Dendritic cell treated with granulocyte-macrophage colony-stimulating factor and Interleukin-4, amounts not matched to agents 40 ng/mL and 50 ng/mL, for 4 days (primary cell): ENCODE measurements at regions of chr5 and their contacts with region 1.

Region 1: GRCh38 chr5:42767491-42768105 is 11.0 kb downstream of the CCDC152 start:
- H3K4me3 Mint-ChIP-seq: no peak overlapping the region
- H3K27ac Mint-ChIP-seq: no peak overlapping the region
- H3K4me1 Mint-ChIP-seq: no peaks in the 10 kb centered on the region
- H3K27me3 Mint-ChIP-seq: peaks cover 1% of the 10 kb centered on the region

Region 2: GRCh38 chr5:41924872-41925554 is 842.6 kb before region 1 on chr5 and contains the start of gene FBXO4:
- intact Hi-C with region 1: loop called (anchors 10 kb)
- H3K4me3 Mint-ChIP-seq: peak within 1 kb of the TSS; percentile 93
- H3K27ac Mint-ChIP-seq: peak within 1 kb of the TSS; percentile 99
- H3K4me1 Mint-ChIP-seq: peaks cover 28% of the 10 kb centered on the region
- H3K27me3 Mint-ChIP-seq: no peaks in the 10 kb centered on the region

Region 3: DNA sequence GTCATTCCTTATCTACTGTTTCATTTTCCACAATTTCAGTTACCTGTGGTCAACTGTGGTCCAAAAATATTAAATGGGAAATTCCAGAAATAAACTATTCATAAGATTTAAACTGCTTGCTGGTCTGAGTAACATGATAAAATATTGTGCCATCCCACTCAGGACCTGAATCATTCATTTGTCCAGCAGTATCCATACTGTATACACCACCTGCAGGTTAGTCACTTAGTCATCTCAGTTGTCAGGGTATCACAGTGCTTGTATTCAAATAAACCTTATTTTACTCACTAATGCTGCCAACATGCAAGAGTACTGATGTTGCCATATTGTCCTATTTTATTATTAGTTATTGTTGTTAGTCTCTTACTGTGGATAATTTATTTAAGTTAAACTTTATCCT is 702.8 kb before region 1 on chr5:
- intact Hi-C with region 1: loop called (anchors 10 kb)
- H3K4me3 Mint-ChIP-seq: no peak overlapping the region
- H3K27ac Mint-ChIP-seq: no peak overlapping the region
- H3K4me1 Mint-ChIP-seq: no peaks in the 10 kb centered on the region
- H3K27me3 Mint-ChIP-seq: no peaks in the 10 kb centered on the region

Region 4: DNA sequence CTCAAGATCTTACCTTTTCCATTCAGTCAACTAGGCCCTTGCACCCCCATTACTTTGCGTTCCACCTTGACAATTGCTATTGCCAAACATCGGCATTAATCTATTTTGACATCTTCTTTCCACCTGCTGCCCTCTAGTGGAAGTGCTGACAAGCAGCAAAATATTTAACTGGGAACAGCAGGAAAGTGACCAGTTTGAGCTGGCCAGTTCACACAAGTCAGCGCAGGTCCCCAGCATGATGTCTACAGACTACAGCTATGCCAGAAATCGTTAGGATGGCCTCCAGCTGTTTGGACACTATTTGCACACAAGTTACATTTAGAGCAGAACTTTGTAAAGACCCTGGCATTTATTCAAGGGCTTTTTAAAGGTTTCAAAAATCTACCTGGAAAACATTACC is 184.3 kb before region 1 on chr5:
- intact Hi-C with region 1: loop called (anchors 5 kb)
- H3K4me3 Mint-ChIP-seq: no peak overlapping the region
- H3K27ac Mint-ChIP-seq: no peak overlapping the region
- H3K4me1 Mint-ChIP-seq: peaks cover 12% of the 10 kb centered on the region
- H3K27me3 Mint-ChIP-seq: peaks cover 1% of the 10 kb centered on the region